Heart left ventricle (tissue), 16 donors: ENCODE measurements at regions of chr2 and their contacts with region 1.

Region 1: DNA sequence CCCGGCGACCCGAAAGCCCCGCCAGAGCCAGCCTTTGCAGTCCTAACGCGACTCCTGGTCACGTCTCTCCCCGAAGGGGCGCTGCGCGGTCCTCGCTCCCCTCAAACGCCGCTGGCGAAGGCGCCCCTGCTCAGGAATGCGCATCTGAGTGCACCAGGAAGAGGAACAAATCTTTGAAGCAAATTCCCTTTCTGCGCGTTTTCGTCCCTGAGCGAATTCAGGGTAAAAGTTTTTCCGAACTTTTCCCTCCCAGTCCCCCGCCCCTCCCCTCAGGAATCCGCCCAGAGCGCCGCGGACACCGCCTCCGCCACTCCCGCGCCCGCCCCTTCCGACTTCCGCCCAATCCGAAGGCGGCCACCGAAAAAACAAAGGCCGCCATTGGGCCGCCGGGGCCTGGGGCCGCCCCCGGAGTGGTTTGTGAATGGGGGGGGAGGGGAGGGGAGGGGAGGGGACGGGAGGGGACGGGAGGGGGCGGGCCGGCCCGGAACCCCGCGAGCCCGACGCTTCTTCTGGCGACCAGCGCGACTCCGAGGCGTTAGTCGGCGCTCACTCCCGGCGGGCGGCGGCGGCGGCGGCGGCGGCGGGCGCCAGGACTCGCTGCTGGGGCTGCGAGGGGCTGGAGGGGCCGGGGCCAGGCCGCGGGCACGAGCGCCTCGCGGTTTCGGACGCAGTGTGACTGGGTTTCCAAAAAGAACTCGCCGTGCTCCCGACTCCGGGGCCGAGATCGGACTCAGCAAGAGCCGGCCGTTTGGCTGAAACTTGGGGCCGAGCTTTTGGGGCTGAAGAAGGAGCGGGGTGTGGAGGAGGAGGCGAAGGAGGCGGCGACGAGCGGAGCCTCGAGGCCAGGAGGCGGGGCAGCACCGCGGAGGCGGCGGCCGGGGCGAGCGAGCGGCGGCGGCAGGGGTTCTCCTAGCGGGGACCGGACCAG is at the start of gene FZD7:
- DNase-seq: peak; percentile 94 to 96 (median 94)
- ATAC-seq: peak; percentile 90 to 94 (median 91)
- H3K4me3 ChIP-seq: peak within 1 kb of the TSS; percentile 52 to 90 (median 79)
- H3K27ac ChIP-seq: peak within 1 kb of the TSS; percentile 89 to 99 (median 95)
- H3K4me1 ChIP-seq: peaks cover 0 to 37% (median 17%) of the 10 kb centered on the region in 12 donors
- H3K27me3 ChIP-seq: peaks cover 0 to 52% (median 5%) of the 10 kb centered on the region in 9 donors
- CTCF ChIP-seq: peak in 3 of 12 donors; percentile 18 to 35 (median 19)
- POLR2A ChIP-seq: peak; percentile 53 to 83
- total RNA-seq, gene FZD7: 11.3 to 42.0 (median 25.5) TPM

Region 2: GRCh38 chr2:200585730-200586643 is 1447.6 kb before region 1 on chr2 and contains the start of gene AOX1:
- intact Hi-C with region 1: no loop called
- DNase-seq: peak; percentile 18 to 66 (median 37)
- ATAC-seq: peak; percentile 41 to 80 (median 74)
- H3K4me3 ChIP-seq: peak within 1 kb of the TSS; percentile 8 to 69 (median 54)
- H3K27ac ChIP-seq: peak within 1 kb of the TSS in 7 of 12 donors; percentile 9 to 78 (median 41)
- H3K4me1 ChIP-seq: peaks cover 0 to 13% (median 6%) of the 10 kb centered on the region in 12 donors
- H3K27me3 ChIP-seq: peaks cover 0 to 7% (median 0%) of the 10 kb centered on the region in 9 donors
- CTCF ChIP-seq: peak in 1 of 12 donors; percentile 12
- POLR2A ChIP-seq: no peak
- total RNA-seq, gene AOX1: 0.76 to 33.4 (median 2.9) TPM

Region 3: DNA sequence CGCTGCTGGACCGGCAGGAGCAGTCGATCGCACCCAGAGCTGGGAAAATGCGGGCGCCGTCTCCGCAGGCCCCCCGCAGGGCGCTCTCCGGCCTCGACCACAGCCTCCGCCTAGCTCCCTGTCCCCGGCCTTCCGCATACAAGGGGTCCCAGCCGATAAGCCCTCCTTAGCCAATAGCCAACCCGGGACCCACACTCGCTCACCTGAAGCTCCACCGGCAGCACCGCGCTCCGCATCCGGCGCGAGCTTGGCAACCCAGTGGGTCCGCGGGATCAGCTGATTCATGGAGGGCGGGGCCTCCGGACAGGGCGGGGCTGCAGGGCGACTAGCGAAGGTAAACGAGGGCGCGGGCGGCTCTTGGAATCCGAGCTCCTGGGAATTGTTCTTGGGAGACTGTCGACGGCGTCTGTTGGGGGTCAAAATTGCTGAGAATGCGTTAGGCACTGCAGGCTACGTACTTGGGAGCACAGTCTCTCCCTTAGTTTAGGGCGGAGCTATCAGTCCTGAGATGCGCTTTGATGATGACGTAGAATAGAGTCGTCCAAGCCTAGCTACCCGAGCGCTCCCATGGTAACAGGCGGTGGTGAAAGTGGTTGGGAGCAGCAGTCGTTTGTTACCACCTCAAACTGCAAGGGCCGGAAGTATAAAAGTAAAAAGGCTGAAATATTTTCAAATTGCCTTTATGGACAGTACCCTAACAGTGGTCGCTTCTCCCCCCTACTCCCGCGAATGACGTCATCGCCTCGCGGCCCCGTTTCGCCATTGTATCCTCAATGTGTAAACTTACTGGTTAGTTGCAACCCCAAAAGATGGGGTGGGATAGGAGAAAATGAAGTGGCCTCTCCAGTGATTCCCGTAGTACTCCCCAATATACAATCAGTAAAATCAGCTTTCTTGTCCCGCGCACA is 252.7 kb before region 1 on chr2 and contains the start of gene ALS2:
- intact Hi-C with region 1: loop called in 2 of 10 experiments (anchors 5 to 10 kb)
- DNase-seq: peak; percentile 97 to 98 (median 98)
- ATAC-seq: peak; percentile 96 to 98 (median 97)
- H3K4me3 ChIP-seq: peak within 1 kb of the TSS; percentile 64 to 96 (median 78)
- H3K27ac ChIP-seq: peak within 1 kb of the TSS; percentile 70 to 94 (median 90)
- H3K4me1 ChIP-seq: peaks cover 5 to 45% (median 35%) of the 10 kb centered on the region in 12 donors
- H3K27me3 ChIP-seq: no peaks in the 10 kb centered on the region
- CTCF ChIP-seq: peak in 1 of 12 donors; percentile 5
- POLR2A ChIP-seq: peak in 1 of 2 donors; percentile 69
- total RNA-seq, gene ALS2: 24.8 to 45.1 (median 35.8) TPM

Region 4: DNA sequence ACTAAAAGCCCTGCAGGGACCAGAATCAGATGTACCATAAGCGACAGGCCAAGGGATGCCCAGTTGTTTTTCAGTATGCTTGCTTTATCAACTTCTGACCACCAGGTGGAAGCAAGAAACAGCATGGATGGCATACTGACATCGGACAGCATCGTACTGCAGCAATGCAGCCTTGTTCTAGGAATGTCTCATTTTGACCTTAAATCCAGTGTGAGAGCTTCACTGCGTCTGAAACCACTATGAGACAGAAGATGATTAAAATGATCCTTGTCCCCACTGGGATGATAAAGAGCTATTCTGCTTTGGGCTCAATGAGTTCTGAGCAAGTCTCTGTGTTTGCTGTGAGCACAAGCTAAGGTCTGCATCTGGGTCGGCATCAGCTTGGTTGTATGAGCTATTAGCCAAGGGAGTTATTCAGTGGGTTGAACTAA is 172.9 kb before region 1 on chr2:
- intact Hi-C with region 1: loop called in 6 of 10 experiments (anchors 5 to 10 kb)
- DNase-seq: peak in 3 of 5 donors; percentile 33 to 40 (median 36)
- ATAC-seq: peak; percentile 80 to 91 (median 88)
- H3K4me3 ChIP-seq: no peak overlapping the region
- H3K27ac ChIP-seq: no peak overlapping the region
- H3K4me1 ChIP-seq: peaks cover 0 to 7% (median 0%) of the 10 kb centered on the region in 12 donors
- H3K27me3 ChIP-seq: peaks cover 0 to 26% (median 0%) of the 10 kb centered on the region in 9 donors
- CTCF ChIP-seq: peak; percentile 66 to 91 (median 84)
- POLR2A ChIP-seq: no peak

Region 5: GRCh38 chr2:201950606-201951005 is 83.0 kb before region 1 on chr2:
- intact Hi-C with region 1: loop called in 1 of 10 experiments (anchors 5 kb)
- DNase-seq: no peak
- ATAC-seq: no peak
- H3K4me3 ChIP-seq: no peak overlapping the region
- H3K27ac ChIP-seq: no peak overlapping the region
- H3K4me1 ChIP-seq: peaks cover 0 to 11% (median 1%) of the 10 kb centered on the region in 12 donors
- H3K27me3 ChIP-seq: peaks cover 0 to 38% (median 3%) of the 10 kb centered on the region in 9 donors
- CTCF ChIP-seq: no peak
- POLR2A ChIP-seq: no peak

Region 6: GRCh38 chr2:202172439-202173211 is 139.0 kb after region 1 on chr2:
- intact Hi-C with region 1: loop called in 7 of 10 experiments (anchors 5 to 10 kb)
- DNase-seq: no peak
- ATAC-seq: no peak
- H3K4me3 ChIP-seq: no peak overlapping the region
- H3K27ac ChIP-seq: peak overlapping the region in 1 of 12 donors; percentile 52
- H3K4me1 ChIP-seq: peaks cover 0 to 13% (median 4%) of the 10 kb centered on the region in 12 donors
- H3K27me3 ChIP-seq: peaks cover 0 to 5% (median 0%) of the 10 kb centered on the region in 9 donors
- CTCF ChIP-seq: no peak
- POLR2A ChIP-seq: no peak